Heart right ventricle (tissue), 16 donors: ENCODE measurements at regions of chr16 and their contacts with region 1.

Region 1: DNA sequence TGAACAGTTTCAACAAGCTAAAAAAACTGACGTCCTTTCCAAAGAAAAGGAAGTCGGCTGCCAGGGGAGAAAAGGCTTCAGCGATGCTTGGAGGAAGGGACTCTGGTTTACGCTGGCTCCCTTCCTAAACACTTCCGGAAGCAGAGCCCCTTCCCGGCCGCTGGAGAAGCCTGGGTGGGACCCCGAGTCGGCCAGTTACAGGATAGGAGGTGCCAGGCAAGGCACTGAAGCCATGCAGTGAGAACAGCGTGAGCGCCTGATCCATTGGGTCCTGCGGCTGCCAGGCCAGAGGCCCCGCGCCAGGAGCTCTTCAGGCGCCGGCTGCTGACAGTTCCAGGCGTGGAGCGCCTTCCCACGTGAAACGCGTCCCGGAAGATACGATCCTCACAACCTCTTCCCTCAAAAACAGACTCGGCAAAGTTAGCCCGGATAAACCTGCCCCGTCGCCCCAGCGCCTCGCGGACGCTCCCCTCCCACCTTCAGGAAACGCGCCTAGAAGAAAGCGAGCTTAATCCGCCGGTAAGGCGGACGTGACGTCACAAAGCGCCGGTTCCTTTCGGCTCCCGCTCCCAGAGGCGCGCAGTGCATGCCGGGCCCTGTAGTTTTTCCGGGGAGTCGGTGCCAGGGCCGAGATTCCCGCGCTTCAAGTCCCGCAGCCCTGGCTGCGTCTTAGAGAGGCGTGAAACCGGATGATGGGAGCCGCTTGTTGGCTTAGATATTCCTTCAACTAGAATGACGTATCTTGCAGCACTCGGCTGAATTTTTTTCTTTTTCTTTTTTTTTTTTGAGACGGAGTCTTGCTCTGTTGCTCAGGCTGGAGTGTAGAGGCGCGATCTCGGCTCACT is at the start of gene ADAT1:
- DNase-seq: peak; percentile 97 to 98
- ATAC-seq: peak; percentile 97 to 99 (median 98)
- H3K4me3 ChIP-seq: peak within 1 kb of the TSS; percentile 57 to 90 (median 72)
- H3K27ac ChIP-seq: peak within 1 kb of the TSS; percentile 53 to 98 (median 92)
- H3K4me1 ChIP-seq: peaks cover 0 to 39% (median 24%) of the 10 kb centered on the region in 9 donors
- H3K27me3 ChIP-seq: no peaks in the 10 kb centered on the region
- CTCF ChIP-seq: peak in 1 of 9 donors; percentile 15
- total RNA-seq, gene ADAT1: 14.3 to 30.6 (median 23.3) TPM

Region 2: DNA sequence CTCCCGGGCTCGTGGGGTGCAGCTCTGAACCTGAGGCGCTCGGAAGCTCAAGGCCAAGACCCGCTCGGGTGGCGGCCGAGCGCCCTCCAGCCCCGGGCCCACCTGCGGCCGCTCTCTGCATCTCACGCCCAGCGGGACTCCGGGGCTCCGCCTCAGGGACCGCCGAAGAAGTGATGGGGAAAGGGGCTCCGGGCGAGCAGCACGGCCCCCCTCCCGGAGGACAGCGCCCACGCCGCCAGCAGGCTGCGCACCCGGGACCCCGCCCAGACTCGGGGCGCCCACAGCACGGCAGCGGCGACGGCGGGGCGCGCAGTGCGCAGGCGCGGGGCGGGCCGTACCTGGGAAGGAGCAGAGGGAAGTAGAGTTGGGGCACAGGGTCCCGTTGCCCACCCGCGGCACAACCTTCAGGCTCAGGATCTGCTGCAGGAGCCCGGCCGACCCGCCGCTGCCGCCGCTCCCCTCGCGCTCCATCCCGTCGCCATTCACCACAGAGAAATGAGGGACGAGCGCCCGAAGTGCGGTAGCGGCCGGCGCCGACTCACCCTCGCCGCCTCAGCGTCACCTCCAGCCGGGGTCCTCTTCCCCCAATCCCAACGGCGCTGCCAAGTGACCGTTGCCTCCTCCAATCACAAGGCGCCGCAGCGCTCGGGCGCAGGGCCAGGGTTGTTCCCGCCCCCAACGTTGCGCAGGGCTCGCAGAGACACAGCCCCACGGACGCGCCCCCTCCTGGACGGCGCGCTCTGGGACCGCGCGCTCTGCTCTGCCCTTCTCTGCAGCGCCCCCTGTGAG is 158.7 kb before region 1 on chr16 and contains the start of gene TMEM170A:
- intact Hi-C with region 1: loop called in 1 of 10 experiments (anchors 2 kb)
- DNase-seq: peak; percentile 100
- ATAC-seq: peak; percentile 97 to 99 (median 98)
- H3K4me3 ChIP-seq: peak within 1 kb of the TSS; percentile 51 to 100 (median 99)
- H3K27ac ChIP-seq: peak within 1 kb of the TSS; percentile 94 to 99 (median 97)
- H3K4me1 ChIP-seq: peaks cover 0 to 48% (median 19%) of the 10 kb centered on the region in 9 donors
- H3K27me3 ChIP-seq: no peaks in the 10 kb centered on the region
- CTCF ChIP-seq: peak; percentile 100
- total RNA-seq, gene TMEM170A: 7.2 to 12.5 (median 9.3) TPM

Region 3: DNA sequence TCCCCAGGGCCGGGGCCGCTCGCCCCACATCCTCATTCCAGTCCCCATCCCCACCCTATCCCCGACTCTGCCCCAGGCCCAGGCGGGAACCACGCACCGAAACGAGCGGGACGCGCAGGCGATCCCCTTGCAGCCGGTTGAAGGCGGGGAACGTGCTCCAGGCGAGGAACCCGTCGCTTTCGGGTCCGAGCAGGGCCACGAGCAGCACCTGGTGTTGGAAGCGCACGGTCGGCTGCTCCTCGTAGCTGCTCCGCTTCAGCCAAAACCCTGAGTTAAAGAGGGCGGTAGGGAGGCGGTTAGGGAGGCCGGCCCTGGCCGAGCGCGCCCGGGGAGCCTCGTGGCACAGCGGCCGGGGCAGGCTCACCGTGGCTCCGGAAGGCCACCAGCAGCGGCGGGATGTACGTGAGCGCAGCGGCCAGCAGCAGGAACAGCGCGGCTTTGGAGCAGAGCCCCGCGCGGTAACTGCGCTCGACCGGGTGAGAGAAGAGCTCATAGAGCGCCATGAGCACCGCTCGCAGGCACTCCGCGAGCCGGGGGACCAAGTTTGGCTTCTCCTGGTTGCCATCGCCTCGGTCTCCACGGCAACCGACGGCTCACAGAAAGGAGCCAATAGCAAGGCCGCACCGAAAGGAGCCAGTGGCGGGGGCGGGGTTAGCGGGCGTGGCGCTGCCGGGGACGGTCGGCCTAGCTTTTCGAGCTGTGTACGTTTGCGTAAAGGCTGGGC is 67.1 kb before region 1 on chr16 and contains the start of gene TMEM231:
- intact Hi-C with region 1: loop called in 4 of 10 experiments (anchors 1 to 10 kb)
- DNase-seq: peak; percentile 98
- ATAC-seq: peak; percentile 96 to 97 (median 97)
- H3K4me3 ChIP-seq: peak within 1 kb of the TSS; percentile 47 to 89 (median 72)
- H3K27ac ChIP-seq: peak within 1 kb of the TSS; percentile 57 to 90 (median 86)
- H3K4me1 ChIP-seq: peaks cover 5 to 43% (median 15%) of the 10 kb centered on the region in 9 donors
- H3K27me3 ChIP-seq: no peaks in the 10 kb centered on the region
- CTCF ChIP-seq: peak in 1 of 9 donors; percentile 15
- total RNA-seq, gene TMEM231: 3.8 to 13.4 (median 9.6) TPM

Region 4: GRCh38 chr16:75566040-75566810 is 56.8 kb before region 1 on chr16 and contains the start of gene GABARAPL2:
- intact Hi-C with region 1: loop called in 6 of 10 experiments (anchors 2 to 10 kb)
- DNase-seq: peak; percentile 77 to 89
- ATAC-seq: peak; percentile 93 to 97 (median 94)
- H3K4me3 ChIP-seq: peak within 1 kb of the TSS; percentile 88 to 100 (median 96)
- H3K27ac ChIP-seq: peak within 1 kb of the TSS; percentile 73 to 95 (median 90)
- H3K4me1 ChIP-seq: peaks cover 30 to 58% (median 55%) of the 10 kb centered on the region in 9 donors
- H3K27me3 ChIP-seq: no peaks in the 10 kb centered on the region
- CTCF ChIP-seq: no peak
- total RNA-seq, gene GABARAPL2: 177 to 262 (median 243) TPM

Region 5: DNA sequence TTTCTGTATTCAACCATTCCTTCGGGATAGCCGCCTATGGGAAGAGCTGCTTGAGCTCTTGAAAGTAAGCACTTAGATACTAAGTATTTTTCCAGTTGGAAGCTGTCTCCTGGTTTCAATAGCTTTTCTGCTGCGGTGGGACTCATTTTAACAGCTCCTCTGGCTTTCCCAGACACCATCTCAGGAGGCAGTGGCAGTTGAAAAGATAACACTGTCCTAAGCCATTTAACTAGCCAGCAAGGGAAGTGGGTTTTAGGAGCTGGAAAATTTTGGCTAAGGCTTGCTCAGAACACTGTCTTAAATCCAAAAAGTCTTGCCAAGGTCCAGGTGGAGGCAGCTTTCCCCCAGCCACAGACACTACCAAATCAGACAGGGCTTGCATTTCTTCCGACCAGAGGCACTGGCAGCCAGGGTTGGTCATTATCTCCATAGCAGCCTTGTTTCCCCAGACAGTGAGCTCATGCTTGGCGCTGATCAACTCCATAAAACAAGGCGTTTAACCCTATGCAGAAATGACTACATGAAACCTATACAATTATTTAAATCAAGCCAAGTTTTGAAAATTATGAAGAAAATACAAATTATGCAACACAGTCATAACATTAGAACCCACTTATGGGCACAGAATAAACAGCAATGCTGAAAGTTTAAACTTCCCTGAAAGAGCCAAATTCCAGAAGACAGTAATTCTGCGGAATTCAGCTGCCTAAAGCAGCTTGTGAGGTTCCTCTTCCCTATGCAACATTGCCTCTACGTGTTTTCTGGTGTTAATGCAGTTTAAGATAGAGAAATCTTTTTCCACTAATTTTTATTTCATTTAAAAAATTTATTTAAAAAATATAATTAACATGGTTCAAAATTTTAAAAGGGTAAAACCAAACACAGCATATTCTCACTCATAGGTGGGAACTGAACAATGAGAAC is 31.8 kb before region 1 on chr16:
- intact Hi-C with region 1: loop called in 2 of 10 experiments (anchors 2 to 5 kb)
- DNase-seq: peak; percentile 45 to 87
- ATAC-seq: peak; percentile 88 to 94 (median 91)
- H3K4me3 ChIP-seq: peak overlapping the region in 1 of 10 donors; percentile 8
- H3K27ac ChIP-seq: peak overlapping the region; percentile 51 to 94 (median 81)
- H3K4me1 ChIP-seq: peaks cover 10 to 70% (median 55%) of the 10 kb centered on the region in 9 donors
- H3K27me3 ChIP-seq: no peaks in the 10 kb centered on the region
- CTCF ChIP-seq: peak in 4 of 9 donors; percentile 29 to 51 (median 38)

Region 6: DNA sequence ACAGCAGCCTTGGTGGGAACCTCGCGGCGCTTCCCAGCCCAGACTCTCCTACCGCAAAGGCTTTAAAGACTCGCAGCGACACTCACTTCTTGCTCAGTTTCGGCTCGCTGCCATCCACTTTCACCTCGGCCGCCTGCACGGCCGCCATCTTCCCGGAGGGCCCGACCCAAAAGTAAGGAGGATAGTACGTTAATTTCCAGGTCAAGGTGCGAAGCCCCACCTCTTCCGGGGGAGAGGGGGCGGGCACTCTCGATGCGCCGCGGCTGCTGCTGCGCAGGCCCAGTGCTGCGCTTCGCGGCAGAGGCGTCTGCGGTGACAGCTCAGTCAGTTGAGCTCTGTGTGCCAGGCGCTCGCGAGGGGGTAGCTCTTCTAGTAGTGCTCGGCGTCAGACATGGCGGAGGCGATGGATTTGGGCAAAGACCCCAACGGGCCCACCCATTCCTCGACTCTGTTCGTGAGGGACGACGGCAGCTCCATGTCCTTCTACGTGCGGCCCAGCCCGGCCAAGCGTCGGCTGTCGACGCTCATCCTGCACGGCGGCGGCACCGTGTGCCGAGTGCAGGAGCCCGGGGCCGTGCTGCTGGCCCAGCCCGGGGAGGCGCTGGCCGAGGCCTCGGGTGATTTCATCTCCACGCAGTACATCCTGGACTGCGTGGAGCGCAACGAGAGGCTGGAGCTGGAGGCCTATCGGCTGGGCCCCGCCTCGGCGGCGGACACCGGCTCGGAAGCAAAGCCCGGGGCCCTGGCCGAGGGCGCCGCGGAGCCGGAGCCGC is 24.7 kb after region 1 on chr16 and contains the starts of genes KARS1 and TERF2IP:
- intact Hi-C with region 1: loop called in 1 of 10 experiments (anchors 2 kb)
- DNase-seq: peak; percentile 92 to 93
- ATAC-seq: peak; percentile 97 to 98 (median 98)
- H3K4me3 ChIP-seq: peak within 1 kb of the TSS; percentile 62 to 100 (median 96)
- H3K27ac ChIP-seq: peak within 1 kb of the TSS; percentile 90 to 99 (median 98)
- H3K4me1 ChIP-seq: peaks cover 0 to 65% (median 60%) of the 10 kb centered on the region in 9 donors
- H3K27me3 ChIP-seq: no peaks in the 10 kb centered on the region
- CTCF ChIP-seq: no peak
- total RNA-seq, gene KARS1: 123 to 145 (median 129) TPM
- total RNA-seq, gene TERF2IP: 49.1 to 79.3 (median 64.5) TPM

Region 7: GRCh38 chr16:75965504-75966374 is 342.8 kb after region 1 on chr16:
- intact Hi-C with region 1: no loop called
- DNase-seq: no peak
- ATAC-seq: no peak
- H3K4me3 ChIP-seq: no peak overlapping the region
- H3K27ac ChIP-seq: no peak overlapping the region
- H3K4me1 ChIP-seq: no peaks in the 10 kb centered on the region
- H3K27me3 ChIP-seq: no peaks in the 10 kb centered on the region
- CTCF ChIP-seq: no peak